ENCODE measurements at regions of chr1 and their contacts with region 1.

Region 1: DNA sequence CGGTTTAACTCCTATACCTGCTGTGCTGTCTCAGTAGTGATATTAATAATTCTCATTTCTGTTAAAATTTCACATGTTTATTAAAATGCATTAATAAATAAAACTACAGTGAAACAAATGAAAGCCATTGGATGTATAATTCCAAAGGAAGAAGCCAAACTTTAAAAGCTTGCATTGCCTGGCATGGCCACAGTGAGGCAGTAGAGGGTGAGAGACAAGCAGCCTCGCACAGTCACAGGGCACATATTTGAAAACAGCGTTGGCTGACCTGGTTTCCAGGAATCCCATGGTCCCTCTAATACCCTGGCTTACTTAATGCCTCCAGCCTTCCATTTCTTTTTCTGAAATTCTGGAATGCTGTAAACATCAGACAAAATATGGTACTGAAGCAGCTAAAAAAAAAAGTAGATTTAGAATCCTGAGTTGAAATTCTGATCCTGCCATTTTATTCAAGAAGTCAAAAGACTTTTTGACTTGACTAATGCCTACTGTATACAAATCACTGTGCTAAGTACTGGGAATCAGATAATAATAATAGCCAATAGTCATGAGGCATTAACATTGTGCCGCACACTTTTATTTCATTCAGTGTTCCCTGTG is 6.7 kb upstream of the RNASEL start:
- DNase-seq: peak in 2 of 3 donors; percentile 68 to 86
- ATAC-seq: peak; percentile 84
- H3K4me3 ChIP-seq: no peak overlapping the region
- H3K4me1 ChIP-seq: no peaks in the 10 kb centered on the region
- CTCF ChIP-seq: peak; percentile 76

Region 2: DNA sequence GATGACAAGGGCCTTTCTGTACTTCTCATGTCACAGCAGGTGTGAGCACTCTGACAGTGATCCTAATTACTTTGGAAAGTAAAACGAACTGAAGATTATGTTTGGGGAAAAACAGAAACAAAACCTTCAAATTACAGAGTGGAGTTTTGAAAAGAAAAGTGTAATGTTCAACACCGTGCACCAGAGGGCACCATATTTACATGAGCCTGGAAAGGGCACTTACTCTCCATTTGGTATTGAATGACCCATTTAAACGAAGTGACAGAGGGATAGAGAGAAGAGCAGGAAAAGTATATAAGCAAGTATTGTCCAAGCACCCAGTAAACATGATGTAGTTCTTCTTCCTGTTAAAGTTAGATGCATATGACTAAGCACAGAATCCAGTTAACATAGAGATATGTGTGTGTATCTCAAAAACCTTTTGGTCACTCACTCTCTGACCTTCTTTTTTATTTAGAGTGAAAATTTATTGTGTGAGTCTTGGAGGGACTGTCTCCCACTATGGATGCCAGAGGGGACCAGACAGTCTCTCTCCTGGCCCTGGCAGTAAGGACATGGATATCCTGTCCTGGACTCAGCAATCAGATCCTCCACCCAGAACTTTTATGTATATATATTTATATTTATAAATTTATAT is 149.6 kb before region 1 on chr1:
- intact Hi-C with region 1: loop called in 1 of 2 experiments (anchors 5 kb)
- DNase-seq: peak in 1 of 3 donors; percentile 62
- ATAC-seq: peak; percentile 84
- H3K4me3 ChIP-seq: no peak overlapping the region
- H3K4me1 ChIP-seq: no peaks in the 10 kb centered on the region
- CTCF ChIP-seq: peak; percentile 37

Region 3: GRCh38 chr1:182677397-182678098 is 81.8 kb after region 1 on chr1:
- intact Hi-C with region 1: no loop called
- DNase-seq: no peak
- ATAC-seq: no peak
- H3K4me3 ChIP-seq: no peak overlapping the region
- H3K4me1 ChIP-seq: no peaks in the 10 kb centered on the region
- CTCF ChIP-seq: no peak